HepG2 (cell line): ENCODE measurements at regions of chr4 and their contacts with region 1.

Region 1: GRCh38 chr4:112284662-112285411 is 867 bp downstream of the TIFA start:
- DNase-seq: no peak
- ATAC-seq: peak; percentile 28
- H3K4me3 ChIP-seq: peak overlapping the region; percentile 75 to 83 (median 81)
- H3K27ac ChIP-seq: peak overlapping the region; percentile 24
- H3K4me1 ChIP-seq: peaks cover 54% of the 10 kb centered on the region
- H3K27me3 ChIP-seq: no peaks in the 10 kb centered on the region; a peak in 2 of 5 replicates
- CTCF ChIP-seq: no peak
- EP300 ChIP-seq: no peak
- POLR2A ChIP-seq: no peak
- RAD21 ChIP-seq: no peak

Region 2: GRCh38 chr4:112296949-112297880 is 12.4 kb after region 1 on chr4 and contains the start of gene ALPK1:
- CTCF ChIA-PET with region 1: no interaction called
- POLR2A ChIA-PET with region 1: interaction called, 11 read pairs
- in situ Hi-C with region 1: no loop called
- intact Hi-C with region 1: no loop called
- DNase-seq: peak; percentile 33
- ATAC-seq: peak; percentile 62
- H3K4me3 ChIP-seq: peak within 1 kb of the TSS; percentile 26 to 48 (median 38); a peak in 5 of 6 replicates
- H3K27ac ChIP-seq: no peak within 1 kb of the TSS
- H3K4me1 ChIP-seq: peaks cover 16% of the 10 kb centered on the region
- H3K27me3 ChIP-seq: no peaks in the 10 kb centered on the region
- CTCF ChIP-seq: no peak
- EP300 ChIP-seq: no peak
- POLR2A ChIP-seq: no peak
- RAD21 ChIP-seq: no peak
- total RNA-seq, gene ALPK1: 1.3 and 1.5 TPM in 2 replicates